CD8-positive, alpha-beta T cell (primary cell): ENCODE measurements at regions of chr18 and their contacts with region 1.

Region 1: GRCh38 chr18:48951448-48952286 is 902 bp upstream of the SMAD7 start:
- DNase-seq: peak; percentile 61 to 93 (median 80)
- ATAC-seq: peak; percentile 35
- H3K4me3 ChIP-seq: peak overlapping the region; percentile 77 to 85
- H3K4me3 Mint-ChIP-seq: peak overlapping the region; percentile 94
- H3K27ac ChIP-seq: peak overlapping the region; percentile 82 to 97
- H3K27ac Mint-ChIP-seq: peak overlapping the region; percentile 97
- H3K4me1 ChIP-seq: peaks cover 24% of the 10 kb centered on the region
- H3K4me1 Mint-ChIP-seq: peaks cover 51% of the 10 kb centered on the region
- H3K27me3 ChIP-seq: no peaks in the 10 kb centered on the region
- H3K27me3 Mint-ChIP-seq: peaks cover 3% of the 10 kb centered on the region
- CTCF ChIP-seq: no peak

Region 2: GRCh38 chr18:48834413-48835031 is 117.1 kb before region 1 on chr18:
- CTCF ChIA-PET with region 1: no interaction called
- POLR2A ChIA-PET with region 1: interaction called, 3 read pairs
- intact Hi-C with region 1: loop called (anchors 2 to 5 kb)
- DNase-seq: peak; percentile 28 to 92 (median 75)
- ATAC-seq: peak; percentile 76
- H3K4me3 ChIP-seq: peak overlapping the region; percentile 8 to 59
- H3K4me3 Mint-ChIP-seq: peak overlapping the region; percentile 82
- H3K27ac ChIP-seq: peak overlapping the region; percentile 36 to 90
- H3K27ac Mint-ChIP-seq: peak overlapping the region; percentile 89
- H3K4me1 ChIP-seq: peaks cover 68% of the 10 kb centered on the region
- H3K4me1 Mint-ChIP-seq: peaks cover 76% of the 10 kb centered on the region
- H3K27me3 ChIP-seq: no peaks in the 10 kb centered on the region
- H3K27me3 Mint-ChIP-seq: no peaks in the 10 kb centered on the region
- CTCF ChIP-seq: no peak

Region 3: DNA sequence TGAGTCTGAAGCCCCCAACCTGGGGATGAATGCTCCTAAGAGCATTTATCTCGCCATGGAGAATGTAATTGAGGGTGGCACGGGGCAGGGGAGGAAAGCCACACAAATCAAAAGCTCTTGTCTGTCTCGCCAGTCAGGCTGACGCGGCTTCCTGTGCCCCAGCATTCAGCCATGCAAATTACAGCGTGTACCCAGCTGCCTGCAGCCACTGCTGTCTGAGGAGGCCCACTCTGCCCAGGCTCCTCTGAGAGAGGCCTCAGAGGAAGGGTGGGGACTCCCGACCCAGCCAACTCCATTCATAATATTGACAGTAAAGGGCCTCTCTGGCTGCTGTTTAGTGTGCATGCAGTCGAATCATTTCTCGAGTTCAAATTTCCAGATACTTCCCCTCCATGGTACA is 22.9 kb before region 1 on chr18:
- CTCF ChIA-PET with region 1: interaction called, 5 read pairs
- POLR2A ChIA-PET with region 1: interaction called, 5 read pairs
- intact Hi-C with region 1: loop called (anchors 2 kb)
- DNase-seq: peak; percentile 60 to 91 (median 83)
- ATAC-seq: peak; percentile 92
- H3K4me3 ChIP-seq: no peak overlapping the region
- H3K4me3 Mint-ChIP-seq: peak overlapping the region; percentile 69
- H3K27ac ChIP-seq: peak overlapping the region in 1 of 2 experiments; percentile 70
- H3K27ac Mint-ChIP-seq: peak overlapping the region; percentile 91
- H3K4me1 ChIP-seq: peaks cover 67% of the 10 kb centered on the region
- H3K4me1 Mint-ChIP-seq: peaks cover 92% of the 10 kb centered on the region
- H3K27me3 ChIP-seq: no peaks in the 10 kb centered on the region
- H3K27me3 Mint-ChIP-seq: no peaks in the 10 kb centered on the region
- CTCF ChIP-seq: no peak

Region 4: GRCh38 chr18:48968412-48969215 is 16.9 kb after region 1 on chr18:
- CTCF ChIA-PET with region 1: interaction called, 5 read pairs
- POLR2A ChIA-PET with region 1: interaction called, 10 read pairs
- intact Hi-C with region 1: loop called in 1 of 2 experiments (anchors 2 kb)
- DNase-seq: no peak
- ATAC-seq: no peak
- H3K4me3 ChIP-seq: no peak overlapping the region
- H3K4me3 Mint-ChIP-seq: no peak overlapping the region
- H3K27ac ChIP-seq: no peak overlapping the region
- H3K27ac Mint-ChIP-seq: no peak overlapping the region
- H3K4me1 ChIP-seq: no peaks in the 10 kb centered on the region
- H3K4me1 Mint-ChIP-seq: no peaks in the 10 kb centered on the region
- H3K27me3 ChIP-seq: no peaks in the 10 kb centered on the region
- H3K27me3 Mint-ChIP-seq: peaks cover 3% of the 10 kb centered on the region
- CTCF ChIP-seq: no peak

Region 5: DNA sequence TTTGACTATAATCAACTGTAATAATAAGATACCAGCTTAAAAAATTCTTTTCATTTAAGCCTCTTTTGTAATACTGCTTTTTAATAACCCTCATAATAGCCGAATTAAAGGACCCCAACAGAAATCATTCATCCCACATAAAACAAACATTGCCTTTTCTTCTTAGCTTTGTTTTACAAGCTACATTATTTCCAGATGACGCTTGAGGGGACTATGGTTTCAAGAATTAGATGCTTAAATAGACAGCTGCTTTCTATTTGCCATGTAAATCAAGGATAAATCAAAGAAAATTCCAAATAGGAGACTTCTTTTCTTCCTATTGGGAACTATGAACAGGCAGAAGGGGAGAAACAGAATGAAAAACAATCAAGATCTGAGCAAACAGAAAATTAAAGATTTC is 199.8 kb after region 1 on chr18:
- CTCF ChIA-PET with region 1: no interaction called
- POLR2A ChIA-PET with region 1: no interaction called
- intact Hi-C with region 1: no loop called
- DNase-seq: no peak
- ATAC-seq: no peak
- H3K4me3 ChIP-seq: no peak overlapping the region
- H3K4me3 Mint-ChIP-seq: no peak overlapping the region
- H3K27ac ChIP-seq: no peak overlapping the region
- H3K27ac Mint-ChIP-seq: no peak overlapping the region
- H3K4me1 ChIP-seq: no peaks in the 10 kb centered on the region
- H3K4me1 Mint-ChIP-seq: no peaks in the 10 kb centered on the region
- H3K27me3 ChIP-seq: no peaks in the 10 kb centered on the region
- H3K27me3 Mint-ChIP-seq: no peaks in the 10 kb centered on the region
- CTCF ChIP-seq: no peak

Region 6: GRCh38 chr18:49486953-49487710 is 535.5 kb after region 1 on chr18 and contains the start of gene C18orf32:
- CTCF ChIA-PET with region 1: no interaction called
- POLR2A ChIA-PET with region 1: interaction called, 3 read pairs
- intact Hi-C with region 1: loop called (anchors 2 kb)
- DNase-seq: peak; percentile 87 to 97 (median 95)
- ATAC-seq: peak; percentile 85
- H3K4me3 ChIP-seq: peak within 1 kb of the TSS; percentile 76 to 80
- H3K4me3 Mint-ChIP-seq: peak within 1 kb of the TSS; percentile 97
- H3K27ac ChIP-seq: peak within 1 kb of the TSS; percentile 84 to 90
- H3K27ac Mint-ChIP-seq: peak within 1 kb of the TSS; percentile 98
- H3K4me1 ChIP-seq: peaks cover 49% of the 10 kb centered on the region
- H3K4me1 Mint-ChIP-seq: peaks cover 70% of the 10 kb centered on the region
- H3K27me3 ChIP-seq: no peaks in the 10 kb centered on the region
- H3K27me3 Mint-ChIP-seq: no peaks in the 10 kb centered on the region
- CTCF ChIP-seq: no peak
- total RNA-seq, gene C18orf32: 40.9 to 44.1 TPM

Region 7: DNA sequence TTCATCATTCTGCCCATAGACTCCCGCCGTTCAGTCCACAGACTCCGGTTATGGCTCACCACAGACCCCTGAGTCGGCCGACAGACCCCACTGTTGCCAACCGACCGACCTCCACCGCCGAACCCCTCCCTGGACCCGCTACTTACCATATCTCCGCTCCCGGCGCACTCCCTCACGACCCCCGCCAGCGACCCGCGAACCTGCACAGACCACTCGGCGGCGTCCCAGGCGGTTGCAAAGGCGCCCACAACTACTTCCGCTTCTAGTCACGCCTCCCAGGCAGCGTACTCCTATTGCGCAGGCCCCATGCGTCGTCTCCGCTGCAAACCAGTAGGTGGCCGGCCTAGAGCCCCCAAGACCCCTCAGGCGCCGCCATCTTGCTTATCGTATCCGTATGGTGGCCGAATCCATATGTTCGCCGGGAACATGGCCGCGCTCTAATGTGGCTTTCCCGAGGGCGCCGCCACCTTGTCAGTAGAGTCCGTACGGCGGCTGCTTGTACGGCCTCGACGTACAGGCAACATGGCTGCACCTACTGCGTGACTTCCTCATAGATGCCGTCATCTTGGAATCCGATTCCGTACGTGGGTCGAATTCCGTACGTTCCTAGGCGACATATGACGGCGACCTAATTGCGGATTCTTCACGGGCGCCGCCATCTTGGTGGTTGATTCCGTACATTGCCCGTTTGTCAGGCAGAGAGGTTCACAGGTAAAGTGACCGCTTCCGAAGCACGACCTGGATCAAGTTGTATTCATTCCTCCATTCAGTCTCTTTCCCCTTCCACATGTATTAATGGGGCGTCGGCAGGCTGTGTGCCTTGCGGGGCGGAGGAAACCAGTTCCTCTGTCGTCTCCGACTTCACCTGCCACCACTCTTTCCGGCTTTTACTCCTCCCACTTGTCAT is 1336.0 kb after region 1 on chr18 and contains the start of gene CXXC1:
- CTCF ChIA-PET with region 1: no interaction called
- POLR2A ChIA-PET with region 1: no interaction called
- intact Hi-C with region 1: loop called (anchors 5 to 10 kb)
- DNase-seq: peak; percentile 96 to 100 (median 97)
- ATAC-seq: peak; percentile 88
- H3K4me3 ChIP-seq: peak within 1 kb of the TSS; percentile 91 to 98
- H3K4me3 Mint-ChIP-seq: peak within 1 kb of the TSS; percentile 99
- H3K27ac ChIP-seq: peak within 1 kb of the TSS; percentile 91 to 99
- H3K27ac Mint-ChIP-seq: peak within 1 kb of the TSS; percentile 99
- H3K4me1 ChIP-seq: peaks cover 14% of the 10 kb centered on the region
- H3K4me1 Mint-ChIP-seq: peaks cover 34% of the 10 kb centered on the region
- H3K27me3 ChIP-seq: no peaks in the 10 kb centered on the region
- H3K27me3 Mint-ChIP-seq: no peaks in the 10 kb centered on the region
- CTCF ChIP-seq: peak; percentile 22
- total RNA-seq, gene CXXC1: 107 to 119 TPM

Region 8: GRCh38 chr18:50797142-50797541 is 1845.5 kb after region 1 on chr18:
- CTCF ChIA-PET with region 1: no interaction called
- POLR2A ChIA-PET with region 1: no interaction called
- intact Hi-C with region 1: no loop called
- DNase-seq: no peak
- ATAC-seq: no peak
- H3K4me3 ChIP-seq: no peak overlapping the region
- H3K4me3 Mint-ChIP-seq: no peak overlapping the region
- H3K27ac ChIP-seq: no peak overlapping the region
- H3K27ac Mint-ChIP-seq: no peak overlapping the region
- H3K4me1 ChIP-seq: no peaks in the 10 kb centered on the region
- H3K4me1 Mint-ChIP-seq: no peaks in the 10 kb centered on the region
- H3K27me3 ChIP-seq: peaks cover 0 to 5% of the 10 kb centered on the region in 2 experiments
- H3K27me3 Mint-ChIP-seq: peaks cover 40% of the 10 kb centered on the region
- CTCF ChIP-seq: no peak